Naive thymus-derived CD4-positive, alpha-beta T cell (primary cell): ENCODE measurements at regions of chr20 and their contacts with region 1.

Region 1: DNA sequence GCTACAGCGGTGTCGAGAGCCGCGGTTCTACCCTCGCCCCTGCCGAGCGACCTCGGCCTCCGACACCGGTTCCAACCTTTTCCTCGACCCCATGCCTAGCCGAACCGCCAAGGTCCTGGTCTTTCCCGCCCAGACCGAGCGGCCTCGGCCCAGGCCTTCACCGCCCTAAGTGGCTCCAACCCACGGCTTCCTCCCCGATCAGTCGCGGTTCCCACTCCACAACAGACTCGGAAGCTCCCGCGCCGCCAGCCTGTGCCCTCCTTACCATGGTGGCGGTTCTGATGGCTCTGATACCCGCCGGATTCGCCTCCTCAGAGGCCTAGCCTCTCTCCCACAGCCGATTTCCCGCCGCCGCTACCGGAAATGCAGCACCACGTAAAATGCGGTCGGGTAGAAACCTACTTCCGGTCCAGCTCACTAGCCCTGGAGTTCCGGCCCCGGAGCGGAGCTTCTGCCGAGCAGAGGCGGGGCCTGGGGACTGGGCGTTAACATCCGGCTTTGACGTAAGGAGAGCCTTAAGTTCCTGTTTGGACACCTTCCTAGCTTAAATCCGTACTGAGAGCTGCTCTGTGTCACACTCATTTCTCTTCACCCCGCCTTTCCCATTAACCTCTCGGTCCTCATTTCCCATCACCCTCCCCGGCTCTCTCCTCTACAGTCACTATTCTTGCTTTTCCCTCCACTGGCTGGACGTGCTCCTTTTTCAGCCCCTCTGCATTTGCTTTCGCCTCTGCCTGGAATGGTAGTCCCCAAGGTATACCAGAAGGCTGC is at the start of gene SNRPB:
- DNase-seq: peak; percentile 87 to 97 (median 96)
- ATAC-seq: peak; percentile 97
- H3K4me3 ChIP-seq: peak within 1 kb of the TSS; percentile 70
- H3K4me3 Mint-ChIP-seq: peak within 1 kb of the TSS; percentile 88 to 99 (median 98)
- H3K27ac ChIP-seq: peak within 1 kb of the TSS; percentile 93
- H3K27ac Mint-ChIP-seq: peak within 1 kb of the TSS; percentile 91 to 100 (median 98)
- H3K4me1 ChIP-seq: peaks cover 17 to 18% of the 10 kb centered on the region in 2 donors
- H3K4me1 Mint-ChIP-seq: peaks cover 27 to 45% (median 39%) of the 10 kb centered on the region in 7 donors
- H3K27me3 ChIP-seq: no peaks in the 10 kb centered on the region
- H3K27me3 Mint-ChIP-seq: peaks cover 0 to 2% (median 0%) of the 10 kb centered on the region in 5 donors
- total RNA-seq, gene SNRPB: 83.5 to 323 (median 118) TPM

Region 2: GRCh38 chr20:1225783-1226654 is 1244.6 kb before region 1 on chr20 and contains the start of gene RAD21L1:
- CTCF ChIA-PET with region 1: no interaction called
- POLR2A ChIA-PET with region 1: no interaction called
- intact Hi-C with region 1: no loop called
- DNase-seq: peak; percentile 55 to 83 (median 66)
- ATAC-seq: peak; percentile 96
- H3K4me3 ChIP-seq: peak within 1 kb of the TSS; percentile 76
- H3K4me3 Mint-ChIP-seq: peak within 1 kb of the TSS; percentile 82 to 92 (median 87)
- H3K27ac ChIP-seq: peak within 1 kb of the TSS; percentile 73
- H3K27ac Mint-ChIP-seq: peak within 1 kb of the TSS in 8 of 9 donors; percentile 34 to 90 (median 81)
- H3K4me1 ChIP-seq: peaks cover 8 to 12% of the 10 kb centered on the region in 2 donors
- H3K4me1 Mint-ChIP-seq: peaks cover 0 to 21% (median 14%) of the 10 kb centered on the region in 7 donors
- H3K27me3 ChIP-seq: peaks cover 0 to 11% of the 10 kb centered on the region in 2 donors
- H3K27me3 Mint-ChIP-seq: peaks cover 0 to 65% (median 16%) of the 10 kb centered on the region in 5 donors
- total RNA-seq, gene RAD21L1: 0.58 to 0.81 (median 0.64) TPM in 3 of 5 experiments, not detected in the others

Region 3: GRCh38 chr20:2101865-2102584 is 368.6 kb before region 1 on chr20:
- CTCF ChIA-PET with region 1: no interaction called
- POLR2A ChIA-PET with region 1: interaction called, 10 read pairs
- intact Hi-C with region 1: loop called in 1 of 2 experiments (anchors 1 kb)
- DNase-seq: peak; percentile 82 to 94 (median 92)
- ATAC-seq: peak; percentile 88
- H3K4me3 ChIP-seq: peak overlapping the region; percentile 88
- H3K4me3 Mint-ChIP-seq: peak overlapping the region; percentile 90 to 97 (median 96)
- H3K27ac ChIP-seq: peak overlapping the region; percentile 96
- H3K27ac Mint-ChIP-seq: peak overlapping the region; percentile 99 to 100 (median 100)
- H3K4me1 ChIP-seq: peaks cover 29 to 38% of the 10 kb centered on the region in 2 donors
- H3K4me1 Mint-ChIP-seq: peaks cover 36 to 58% (median 44%) of the 10 kb centered on the region in 7 donors
- H3K27me3 ChIP-seq: no peaks in the 10 kb centered on the region
- H3K27me3 Mint-ChIP-seq: peaks cover 0 to 4% (median 0%) of the 10 kb centered on the region in 5 donors

Region 4: GRCh38 chr20:2508631-2509467 is 38.2 kb after region 1 on chr20 and contains the start of gene ZNF343:
- CTCF ChIA-PET with region 1: no interaction called
- POLR2A ChIA-PET with region 1: interaction called, 34 read pairs
- intact Hi-C with region 1: loop called (anchors 1 kb)
- DNase-seq: peak; percentile 61 to 84 (median 82)
- ATAC-seq: peak; percentile 97
- H3K4me3 ChIP-seq: peak within 1 kb of the TSS; percentile 97
- H3K4me3 Mint-ChIP-seq: peak within 1 kb of the TSS; percentile 92 to 100 (median 98)
- H3K27ac ChIP-seq: peak within 1 kb of the TSS; percentile 84
- H3K27ac Mint-ChIP-seq: peak within 1 kb of the TSS; percentile 90 to 99 (median 98)
- H3K4me1 ChIP-seq: peaks cover 6 to 7% of the 10 kb centered on the region in 2 donors
- H3K4me1 Mint-ChIP-seq: peaks cover 11 to 30% (median 25%) of the 10 kb centered on the region in 7 donors
- H3K27me3 ChIP-seq: no peaks in the 10 kb centered on the region
- H3K27me3 Mint-ChIP-seq: peaks cover 8 to 28% (median 12%) of the 10 kb centered on the region in 5 donors
- total RNA-seq, gene ZNF343: 7.5 to 14.4 (median 11.8) TPM

Region 5: GRCh38 chr20:2523919-2524708 is 53.5 kb after region 1 on chr20:
- CTCF ChIA-PET with region 1: interaction called, 4 read pairs
- POLR2A ChIA-PET with region 1: interaction called, 15 read pairs
- intact Hi-C with region 1: loop called (anchors 1 kb)
- DNase-seq: peak; percentile 82 to 97 (median 91)
- ATAC-seq: peak; percentile 96
- H3K4me3 ChIP-seq: peak overlapping the region; percentile 92
- H3K4me3 Mint-ChIP-seq: peak overlapping the region; percentile 80 to 94 (median 90)
- H3K27ac ChIP-seq: peak overlapping the region; percentile 76
- H3K27ac Mint-ChIP-seq: peak overlapping the region; percentile 62 to 94 (median 86)
- H3K4me1 ChIP-seq: peaks cover 0 to 5% of the 10 kb centered on the region in 2 donors
- H3K4me1 Mint-ChIP-seq: peaks cover 6 to 24% (median 10%) of the 10 kb centered on the region in 7 donors
- H3K27me3 ChIP-seq: no peaks in the 10 kb centered on the region
- H3K27me3 Mint-ChIP-seq: peaks cover 0 to 4% (median 0%) of the 10 kb centered on the region in 5 donors

Region 6: GRCh38 chr20:3173610-3174441 is 703.2 kb after region 1 on chr20:
- CTCF ChIA-PET with region 1: no interaction called
- POLR2A ChIA-PET with region 1: no interaction called
- intact Hi-C with region 1: loop called in 1 of 2 experiments (anchors 5 kb)
- DNase-seq: peak in 7 of 9 donors; percentile 81 to 94 (median 92)
- ATAC-seq: peak; percentile 94
- H3K4me3 ChIP-seq: peak overlapping the region; percentile 87
- H3K4me3 Mint-ChIP-seq: peak overlapping the region; percentile 76 to 89 (median 86)
- H3K27ac ChIP-seq: peak overlapping the region; percentile 4
- H3K27ac Mint-ChIP-seq: peak overlapping the region; percentile 3 to 86 (median 51)
- H3K4me1 ChIP-seq: peaks cover 4 to 14% of the 10 kb centered on the region in 2 donors
- H3K4me1 Mint-ChIP-seq: peaks cover 15 to 34% (median 23%) of the 10 kb centered on the region in 7 donors
- H3K27me3 ChIP-seq: peaks cover 0 to 5% of the 10 kb centered on the region in 2 donors
- H3K27me3 Mint-ChIP-seq: peaks cover 0 to 63% (median 16%) of the 10 kb centered on the region in 5 donors

Region 7: GRCh38 chr20:3209257-3209945 is 738.8 kb after region 1 on chr20 and contains the start of gene ITPA:
- CTCF ChIA-PET with region 1: no interaction called
- POLR2A ChIA-PET with region 1: no interaction called
- intact Hi-C with region 1: loop called in 1 of 2 experiments (anchors 2 kb)
- DNase-seq: peak; percentile 26 to 67 (median 42)
- ATAC-seq: peak; percentile 44
- H3K4me3 ChIP-seq: peak within 1 kb of the TSS; percentile 94
- H3K4me3 Mint-ChIP-seq: peak within 1 kb of the TSS; percentile 85 to 100 (median 96)
- H3K27ac ChIP-seq: peak within 1 kb of the TSS; percentile 85
- H3K27ac Mint-ChIP-seq: peak within 1 kb of the TSS; percentile 85 to 99 (median 94)
- H3K4me1 ChIP-seq: peaks cover 8 to 14% of the 10 kb centered on the region in 2 donors
- H3K4me1 Mint-ChIP-seq: peaks cover 20 to 38% (median 31%) of the 10 kb centered on the region in 7 donors
- H3K27me3 ChIP-seq: no peaks in the 10 kb centered on the region
- H3K27me3 Mint-ChIP-seq: no peaks in the 10 kb centered on the region
- total RNA-seq, gene ITPA: 37.7 to 71.2 (median 43.5) TPM